ENCODE measurements at regions of chr2 and their contacts with region 1.

Region 1: GRCh38 chr2:133171393-133172004 is 396.8 kb downstream of the NCKAP5 start:
- DNase-seq: peak; percentile 30
- H3K4me3 ChIP-seq: no peak overlapping the region
- H3K27ac ChIP-seq: no peak overlapping the region
- H3K4me1 ChIP-seq: peaks cover 5 to 13% of the 10 kb centered on the region in 2 experiments; a peak in 3 of 4 replicates
- H3K27me3 ChIP-seq: no peaks in the 10 kb centered on the region
- CTCF ChIP-seq: peak; percentile 78
- EP300 ChIP-seq: no peak
- RAD21 ChIP-seq: peak; percentile 94

Region 2: GRCh38 chr2:132547074-132547687 is 624.3 kb before region 1 on chr2:
- CTCF ChIA-PET with region 1: interaction called, 70 read pairs
- POLR2A ChIA-PET with region 1: no interaction called
- DNase-seq: peak; percentile 64
- H3K4me3 ChIP-seq: peak overlapping the region in 1 of 2 experiments; percentile 6; a peak in 1 of 4 replicates
- H3K27ac ChIP-seq: no peak overlapping the region
- H3K4me1 ChIP-seq: peaks cover 0 to 7% of the 10 kb centered on the region in 2 experiments; a peak in 2 of 4 replicates
- H3K27me3 ChIP-seq: no peaks in the 10 kb centered on the region
- CTCF ChIP-seq: peak; percentile 79
- EP300 ChIP-seq: no peak
- RAD21 ChIP-seq: peak; percentile 87

Region 3: GRCh38 chr2:132651115-132652045 is 520.1 kb before region 1 on chr2:
- CTCF ChIA-PET with region 1: interaction called, 62 read pairs
- POLR2A ChIA-PET with region 1: no interaction called
- DNase-seq: peak; percentile 69
- H3K4me3 ChIP-seq: no peak overlapping the region
- H3K27ac ChIP-seq: no peak overlapping the region
- H3K4me1 ChIP-seq: no peaks in the 10 kb centered on the region; a peak in 1 of 4 replicates
- H3K27me3 ChIP-seq: no peaks in the 10 kb centered on the region
- CTCF ChIP-seq: peak; percentile 81
- EP300 ChIP-seq: no peak
- RAD21 ChIP-seq: peak; percentile 70

Region 4: GRCh38 chr2:132669854-132670495 is 501.5 kb before region 1 on chr2 and contains the start of gene LYPD1:
- CTCF ChIA-PET with region 1: interaction called, 28 read pairs
- POLR2A ChIA-PET with region 1: no interaction called
- DNase-seq: peak; percentile 70
- H3K4me3 ChIP-seq: peak within 1 kb of the TSS; percentile 49 to 76
- H3K27ac ChIP-seq: peak within 1 kb of the TSS in 1 of 2 experiments; percentile 74; a peak in 2 of 4 replicates
- H3K4me1 ChIP-seq: peaks cover 8 to 29% of the 10 kb centered on the region in 2 experiments; a peak in 2 of 4 replicates
- H3K27me3 ChIP-seq: no peaks in the 10 kb centered on the region
- CTCF ChIP-seq: no peak
- EP300 ChIP-seq: no peak
- RAD21 ChIP-seq: no peak
- polyA plus RNA-seq, gene LYPD1: 4.3 and 5.4 TPM in 2 replicates

Region 5: DNA sequence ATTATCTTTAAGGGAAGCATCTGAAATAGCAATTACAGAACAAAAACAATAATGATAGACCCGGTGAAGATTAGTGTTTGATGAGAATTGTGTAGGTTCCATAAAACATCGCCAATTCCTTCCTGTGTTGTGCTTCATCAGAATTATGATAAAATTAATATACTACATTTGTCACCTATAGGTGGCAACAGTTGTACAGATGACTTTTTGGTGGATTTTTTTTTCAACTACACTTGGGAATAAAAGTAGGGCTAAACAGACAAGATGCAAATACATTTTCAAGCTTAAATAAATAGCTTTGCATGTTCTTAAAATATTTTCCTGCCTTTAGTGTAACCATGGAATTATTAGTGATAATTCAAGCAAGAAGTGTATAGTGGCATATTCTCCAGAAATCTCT is 494.5 kb before region 1 on chr2:
- CTCF ChIA-PET with region 1: interaction called, 28 read pairs
- POLR2A ChIA-PET with region 1: no interaction called
- DNase-seq: no peak
- H3K4me3 ChIP-seq: no peak overlapping the region
- H3K27ac ChIP-seq: peak overlapping the region in 1 of 2 experiments; percentile 70; a peak in 2 of 4 replicates
- H3K4me1 ChIP-seq: peaks cover 0 to 16% of the 10 kb centered on the region in 2 experiments; a peak in 1 of 4 replicates
- H3K27me3 ChIP-seq: no peaks in the 10 kb centered on the region
- CTCF ChIP-seq: peak; percentile 47
- EP300 ChIP-seq: no peak
- RAD21 ChIP-seq: peak; percentile 57

Region 6: DNA sequence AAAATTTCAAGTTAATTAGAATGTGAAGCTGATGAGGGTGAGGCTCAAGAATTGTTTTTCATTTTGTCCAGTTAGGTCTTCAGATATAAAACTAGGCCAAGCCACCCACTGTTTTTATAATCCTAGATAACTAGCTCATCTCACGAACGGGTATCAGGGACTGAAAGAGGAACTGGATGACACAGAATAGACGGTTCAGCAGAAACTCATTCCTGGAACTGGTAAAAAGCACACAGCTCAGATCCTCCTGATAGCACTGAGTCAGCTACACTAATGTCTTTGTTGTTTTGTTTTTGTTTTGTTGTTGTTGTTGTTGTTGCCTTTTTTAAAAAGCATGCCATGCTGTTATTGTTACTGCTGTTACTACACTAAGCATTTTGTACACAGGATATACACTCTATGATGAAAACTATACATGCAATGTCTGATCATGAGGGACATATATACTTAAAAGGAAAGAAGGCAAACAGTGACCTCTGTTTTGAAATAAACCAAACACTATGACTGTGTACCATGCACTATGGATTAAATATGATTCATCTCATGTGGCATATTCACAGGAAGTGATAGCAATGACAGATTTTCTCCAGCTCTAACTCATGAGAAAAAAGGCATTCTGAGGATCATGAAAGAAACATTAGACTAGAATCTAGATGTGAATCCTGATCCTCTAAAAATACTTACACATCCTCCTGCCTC is 40.8 kb before region 1 on chr2:
- CTCF ChIA-PET with region 1: no interaction called
- POLR2A ChIA-PET with region 1: no interaction called
- DNase-seq: no peak
- H3K4me3 ChIP-seq: no peak overlapping the region
- H3K27ac ChIP-seq: no peak overlapping the region
- H3K4me1 ChIP-seq: no peaks in the 10 kb centered on the region; a peak in 1 of 4 replicates
- H3K27me3 ChIP-seq: no peaks in the 10 kb centered on the region
- CTCF ChIP-seq: no peak
- EP300 ChIP-seq: no peak
- RAD21 ChIP-seq: no peak

Region 7: DNA sequence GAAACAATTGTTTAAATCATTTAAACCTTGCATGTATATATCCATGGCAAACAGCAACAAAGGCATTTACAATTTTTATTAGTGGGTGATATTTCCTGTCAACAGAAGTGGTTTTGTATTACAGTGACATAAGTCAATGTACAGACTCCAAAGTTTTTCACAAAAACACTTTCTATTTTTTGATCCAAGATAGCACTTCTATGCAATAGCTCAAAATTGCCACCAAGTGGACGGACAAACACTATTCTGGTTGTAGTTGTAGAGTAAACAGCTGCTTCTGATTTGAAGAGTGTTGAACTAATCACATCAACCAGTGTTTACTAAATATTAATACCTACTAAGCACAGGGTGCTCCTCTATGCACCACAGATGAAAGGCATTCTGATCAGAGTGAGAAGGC is 24.6 kb before region 1 on chr2:
- CTCF ChIA-PET with region 1: interaction called, 10 read pairs
- POLR2A ChIA-PET with region 1: no interaction called
- DNase-seq: no peak
- H3K4me3 ChIP-seq: no peak overlapping the region
- H3K27ac ChIP-seq: no peak overlapping the region
- H3K4me1 ChIP-seq: no peaks in the 10 kb centered on the region; a peak in 1 of 4 replicates
- H3K27me3 ChIP-seq: no peaks in the 10 kb centered on the region
- CTCF ChIP-seq: peak; percentile 23; the same call in 1 of the 2 replicates
- EP300 ChIP-seq: no peak
- RAD21 ChIP-seq: peak; percentile 56